Transverse colon (tissue), 4 donors: ENCODE measurements at regions of chr11 and their contacts with region 1.

Region 1: DNA sequence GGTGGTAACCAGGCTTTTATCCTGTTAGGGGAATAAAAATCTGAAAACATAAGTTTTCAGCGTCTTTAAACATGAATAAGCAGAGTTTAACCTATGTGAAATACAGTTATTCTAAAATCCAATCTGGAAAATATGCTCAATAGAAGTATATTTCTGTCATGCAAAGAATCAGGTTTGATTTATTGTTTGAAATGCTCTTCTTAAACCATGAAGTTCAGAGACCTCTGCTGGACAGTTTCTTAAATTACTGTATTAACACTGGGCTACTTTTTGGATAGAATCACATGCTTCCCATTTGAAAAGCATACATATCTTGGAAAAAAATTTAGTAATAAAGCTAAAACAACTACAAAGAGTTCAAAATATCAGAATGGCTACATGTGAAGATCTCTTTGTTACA is 25.4 kb downstream of the APIP start:
- DNase-seq: no peak
- H3K4me3 ChIP-seq: no peak overlapping the region
- H3K27ac ChIP-seq: peak overlapping the region in 2 of 4 donors; percentile 22 to 37
- H3K4me1 ChIP-seq: peaks cover 0 to 20% (median 5%) of the 10 kb centered on the region in 4 donors
- H3K27me3 ChIP-seq: no peaks in the 10 kb centered on the region
- CTCF ChIP-seq: peak; percentile 33 to 68 (median 43)
- EP300 ChIP-seq: no peak
- POLR2A ChIP-seq: no peak

Region 2: GRCh38 chr11:34512840-34513681 is 377.8 kb before region 1 on chr11:
- in situ Hi-C with region 1: loop called in 1 of 4 experiments (anchors 10 kb)
- intact Hi-C with region 1: no loop called
- DNase-seq: peak; percentile 61
- H3K4me3 ChIP-seq: no peak overlapping the region
- H3K27ac ChIP-seq: no peak overlapping the region
- H3K4me1 ChIP-seq: no peaks in the 10 kb centered on the region
- H3K27me3 ChIP-seq: no peaks in the 10 kb centered on the region
- CTCF ChIP-seq: peak; percentile 49 to 77 (median 73)
- EP300 ChIP-seq: no peak
- POLR2A ChIP-seq: no peak

Region 3: GRCh38 chr11:34585735-34586487 is 304.9 kb before region 1 on chr11:
- in situ Hi-C with region 1: loop called (anchors 10 to 25 kb)
- intact Hi-C with region 1: no loop called
- DNase-seq: no peak
- H3K4me3 ChIP-seq: no peak overlapping the region
- H3K27ac ChIP-seq: peak overlapping the region in 3 of 4 donors; percentile 9 to 48 (median 32)
- H3K4me1 ChIP-seq: peaks cover 3 to 24% (median 6%) of the 10 kb centered on the region in 4 donors
- H3K27me3 ChIP-seq: no peaks in the 10 kb centered on the region
- CTCF ChIP-seq: peak; percentile 64 to 82 (median 68)
- EP300 ChIP-seq: no peak
- POLR2A ChIP-seq: no peak